A673 (cell line): ENCODE measurements at regions of chr16 and their contacts with region 1.

Region 1: DNA sequence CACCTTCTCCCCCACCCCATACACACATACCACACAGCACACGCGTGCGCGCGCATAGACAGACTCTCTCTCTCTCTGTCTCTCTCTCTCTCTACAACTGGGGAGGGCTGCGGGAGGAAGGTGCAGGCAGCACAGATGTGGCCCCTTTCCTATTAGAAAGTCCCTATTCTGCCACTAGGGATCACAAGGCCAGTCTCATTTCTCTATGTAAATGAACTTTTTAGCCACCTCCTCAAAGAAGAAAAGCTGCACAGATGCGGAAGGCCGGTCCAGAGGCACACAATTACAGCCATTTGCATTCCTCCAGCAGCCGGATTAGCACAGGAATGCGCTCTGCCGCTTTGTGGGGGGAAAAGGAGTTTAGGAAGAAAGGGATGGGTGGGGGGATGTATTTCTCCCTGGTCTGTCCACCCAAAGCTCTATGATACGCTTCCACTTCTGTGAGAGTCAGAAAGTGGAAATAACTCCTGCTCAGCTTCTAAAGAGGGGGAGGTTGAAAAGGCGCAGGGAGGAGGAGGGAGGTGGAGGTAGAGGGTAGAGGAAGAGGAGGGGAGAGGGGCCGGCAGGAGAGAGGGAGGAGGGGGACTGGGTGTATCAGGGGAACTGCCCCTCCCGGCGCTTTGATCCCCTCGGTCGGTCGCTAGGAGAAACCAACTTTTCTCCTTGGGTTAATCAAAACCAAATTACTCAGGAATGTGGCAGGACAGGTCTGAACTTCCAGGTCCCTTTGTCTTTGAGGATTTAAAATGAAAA is 11.7 kb downstream of the ZFHX3 start:
- DNase-seq: peak; percentile 40
- H3K4me3 ChIP-seq: no peak overlapping the region
- H3K27ac ChIP-seq: peak overlapping the region; percentile 46
- H3K4me1 ChIP-seq: peaks cover 60% of the 10 kb centered on the region
- H3K27me3 ChIP-seq: no peaks in the 10 kb centered on the region
- CTCF ChIP-seq: no peak

Region 2: GRCh38 chr16:72879846-72880245 is 156.4 kb before region 1 on chr16:
- CTCF ChIA-PET with region 1: interaction called, 12 read pairs
- POLR2A ChIA-PET with region 1: no interaction called
- intact Hi-C with region 1: no loop called
- DNase-seq: no peak
- H3K4me3 ChIP-seq: no peak overlapping the region
- H3K27ac ChIP-seq: no peak overlapping the region
- H3K4me1 ChIP-seq: peaks cover 40% of the 10 kb centered on the region
- H3K27me3 ChIP-seq: no peaks in the 10 kb centered on the region
- CTCF ChIP-seq: no peak

Region 3: DNA sequence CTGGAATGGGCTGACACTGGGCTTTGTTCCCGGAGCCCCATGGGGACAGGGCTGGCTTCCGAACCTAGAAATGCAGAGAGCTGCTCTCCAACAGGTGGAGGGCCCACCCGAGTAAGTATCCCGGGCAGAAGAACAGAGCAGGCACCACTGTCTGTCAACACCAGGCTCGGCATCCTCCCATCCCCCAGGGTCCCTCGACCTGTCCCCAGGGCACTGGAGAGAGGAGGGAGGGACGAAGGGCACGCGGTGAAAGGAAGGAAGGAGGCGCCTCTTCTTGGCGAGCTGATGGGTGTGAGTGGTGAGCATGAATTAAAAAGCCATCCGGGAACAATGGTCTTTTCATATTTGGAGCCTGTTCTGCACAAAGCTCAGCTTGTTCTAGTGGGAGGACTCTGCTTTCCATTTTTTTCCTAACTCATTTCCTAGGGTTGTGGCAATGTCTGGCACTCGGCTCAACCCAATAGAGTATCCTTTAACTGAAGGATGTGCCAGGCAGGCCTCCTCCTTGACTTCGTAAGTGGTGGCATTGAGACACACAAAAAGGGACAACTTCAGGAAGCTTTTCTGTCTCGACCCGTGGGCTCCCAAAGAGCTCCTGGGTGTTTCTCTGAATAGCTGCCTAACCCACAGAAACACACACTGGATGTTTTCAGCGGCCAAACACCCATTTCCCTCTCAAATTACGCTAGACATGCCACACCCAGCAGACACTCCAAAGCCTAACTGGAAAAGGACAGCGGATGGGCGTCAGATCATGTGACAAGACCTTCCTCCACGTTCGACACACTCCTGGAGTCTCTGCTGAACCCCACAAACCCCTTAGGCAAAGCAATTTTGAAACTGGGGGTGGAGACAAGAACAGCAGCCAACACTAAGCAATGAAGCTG is 36.0 kb before region 1 on chr16:
- CTCF ChIA-PET with region 1: interaction called, 12 read pairs
- POLR2A ChIA-PET with region 1: no interaction called
- intact Hi-C with region 1: no loop called
- DNase-seq: peak; percentile 65
- H3K4me3 ChIP-seq: no peak overlapping the region
- H3K27ac ChIP-seq: peak overlapping the region; percentile 2
- H3K4me1 ChIP-seq: peaks cover 21% of the 10 kb centered on the region
- H3K27me3 ChIP-seq: no peaks in the 10 kb centered on the region
- CTCF ChIP-seq: no peak